HCT116 (cell line): ENCODE measurements at regions of chr7 and their contacts with region 1.

Region 1: GRCh38 chr7:82740246-82740848 is 296.8 kb upstream of the CACNA2D1 start:
- DNase-seq: peak; percentile 50
- ATAC-seq: peak; percentile 82
- H3K4me3 ChIP-seq: no peak overlapping the region
- H3K27ac ChIP-seq: no peak overlapping the region
- H3K4me1 ChIP-seq: no peaks in the 10 kb centered on the region
- H3K27me3 ChIP-seq: no peaks in the 10 kb centered on the region
- CTCF ChIP-seq: peak; percentile 64 to 83 (median 80); a peak in 5 of 6 replicates
- POLR2A ChIP-seq: no peak
- RAD21 ChIP-seq: peak; percentile 75

Region 2: GRCh38 chr7:83072576-83073517 is 332.5 kb after region 1 on chr7:
- CTCF ChIA-PET with region 1: interaction called, 6 read pairs
- POLR2A ChIA-PET with region 1: no interaction called
- RAD21 ChIA-PET with region 1: no interaction called
- intact Hi-C with region 1: loop called (anchors 2 kb)
- DNase-seq: no peak
- ATAC-seq: peak; percentile 66
- H3K4me3 ChIP-seq: no peak overlapping the region
- H3K27ac ChIP-seq: no peak overlapping the region
- H3K4me1 ChIP-seq: no peaks in the 10 kb centered on the region
- H3K27me3 ChIP-seq: no peaks in the 10 kb centered on the region
- CTCF ChIP-seq: peak; percentile 37 to 43 (median 37); a peak in 4 of 6 replicates
- POLR2A ChIP-seq: no peak
- RAD21 ChIP-seq: peak; percentile 56; the same call in 1 of the 2 replicates

Region 3: DNA sequence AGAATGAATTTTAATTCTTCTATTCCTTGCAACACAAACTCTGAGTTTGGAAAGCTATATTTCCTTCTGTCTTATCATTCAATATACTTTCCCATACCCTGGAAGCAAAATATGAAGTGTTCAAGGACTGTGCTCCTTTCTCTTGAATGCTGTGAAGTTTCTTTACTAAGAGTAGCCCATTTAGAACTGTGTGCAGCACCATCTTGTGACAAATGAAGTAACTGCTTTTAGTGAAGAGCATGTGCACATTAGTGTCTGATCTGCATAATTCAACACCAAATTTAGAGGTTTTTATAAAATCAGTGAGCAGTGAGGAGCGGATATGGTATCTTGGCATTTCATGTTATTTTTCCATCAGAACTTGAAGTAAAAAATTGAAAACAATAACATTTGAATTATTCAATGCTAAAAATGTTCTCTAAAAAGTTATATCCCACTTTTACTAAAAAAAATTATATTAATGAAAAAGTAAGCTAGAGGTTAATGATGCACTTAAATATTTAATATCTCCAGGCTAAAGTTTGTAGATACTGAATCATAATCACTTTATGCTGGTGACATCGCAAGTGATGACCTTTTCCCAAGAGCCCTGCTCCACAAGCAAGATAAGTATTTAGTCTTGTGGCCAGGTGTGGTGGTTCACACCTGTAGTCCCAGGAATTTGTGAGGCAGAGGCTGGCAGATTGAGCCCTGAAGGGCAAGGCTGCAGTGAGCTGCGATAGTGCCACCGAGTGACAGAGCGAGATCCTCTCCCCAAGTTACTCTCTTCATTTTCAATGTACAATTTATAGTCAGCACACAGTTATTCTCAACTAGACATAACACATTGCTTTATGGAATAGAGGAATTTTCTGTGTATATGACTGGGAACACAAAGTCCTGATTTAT is 531.1 kb after region 1 on chr7:
- CTCF ChIA-PET with region 1: interaction called, 4 read pairs
- POLR2A ChIA-PET with region 1: no interaction called
- RAD21 ChIA-PET with region 1: no interaction called
- intact Hi-C with region 1: loop called (anchors 1 kb)
- DNase-seq: peak; percentile 26
- ATAC-seq: peak; percentile 85
- H3K4me3 ChIP-seq: no peak overlapping the region
- H3K27ac ChIP-seq: no peak overlapping the region
- H3K4me1 ChIP-seq: no peaks in the 10 kb centered on the region
- H3K27me3 ChIP-seq: no peaks in the 10 kb centered on the region
- CTCF ChIP-seq: peak; percentile 41 to 61 (median 51); a peak in 4 of 6 replicates
- POLR2A ChIP-seq: no peak
- RAD21 ChIP-seq: peak; percentile 73

Region 4: GRCh38 chr7:83365746-83366145 is 625.4 kb after region 1 on chr7:
- CTCF ChIA-PET with region 1: interaction called, 4 read pairs
- POLR2A ChIA-PET with region 1: no interaction called
- RAD21 ChIA-PET with region 1: no interaction called
- intact Hi-C with region 1: loop called (anchors 2 kb)
- DNase-seq: no peak
- ATAC-seq: no peak
- H3K4me3 ChIP-seq: no peak overlapping the region
- H3K27ac ChIP-seq: no peak overlapping the region
- H3K4me1 ChIP-seq: no peaks in the 10 kb centered on the region
- H3K27me3 ChIP-seq: no peaks in the 10 kb centered on the region
- CTCF ChIP-seq: peak; percentile 19 to 43 (median 23); a peak in 2 of 6 replicates
- POLR2A ChIP-seq: no peak
- RAD21 ChIP-seq: peak; percentile 52